Prostate gland (tissue), 2 donors: ENCODE measurements at regions of chr14 and their contacts with region 1.

Region 1: GRCh38 chr14:68140111-68140741 is 320.6 kb downstream of the RAD51B start:
- DNase-seq: peak; percentile 89
- H3K4me3 ChIP-seq: no peak overlapping the region
- H3K27ac ChIP-seq: peak overlapping the region; percentile 76 to 77
- H3K4me1 ChIP-seq: peaks cover 10% of the 10 kb centered on the region
- H3K27me3 ChIP-seq: no peaks in the 10 kb centered on the region
- CTCF ChIP-seq: no peak
- POLR2A ChIP-seq: peak; percentile 21

Region 2: GRCh38 chr14:68104518-68104917 is 35.7 kb before region 1 on chr14:
- intact Hi-C with region 1: loop called (anchors 1 kb)
- DNase-seq: no peak
- H3K4me3 ChIP-seq: no peak overlapping the region
- H3K27ac ChIP-seq: peak overlapping the region; percentile 17 to 21
- H3K4me1 ChIP-seq: no peaks in the 10 kb centered on the region
- H3K27me3 ChIP-seq: no peaks in the 10 kb centered on the region
- CTCF ChIP-seq: no peak
- POLR2A ChIP-seq: no peak

Region 3: DNA sequence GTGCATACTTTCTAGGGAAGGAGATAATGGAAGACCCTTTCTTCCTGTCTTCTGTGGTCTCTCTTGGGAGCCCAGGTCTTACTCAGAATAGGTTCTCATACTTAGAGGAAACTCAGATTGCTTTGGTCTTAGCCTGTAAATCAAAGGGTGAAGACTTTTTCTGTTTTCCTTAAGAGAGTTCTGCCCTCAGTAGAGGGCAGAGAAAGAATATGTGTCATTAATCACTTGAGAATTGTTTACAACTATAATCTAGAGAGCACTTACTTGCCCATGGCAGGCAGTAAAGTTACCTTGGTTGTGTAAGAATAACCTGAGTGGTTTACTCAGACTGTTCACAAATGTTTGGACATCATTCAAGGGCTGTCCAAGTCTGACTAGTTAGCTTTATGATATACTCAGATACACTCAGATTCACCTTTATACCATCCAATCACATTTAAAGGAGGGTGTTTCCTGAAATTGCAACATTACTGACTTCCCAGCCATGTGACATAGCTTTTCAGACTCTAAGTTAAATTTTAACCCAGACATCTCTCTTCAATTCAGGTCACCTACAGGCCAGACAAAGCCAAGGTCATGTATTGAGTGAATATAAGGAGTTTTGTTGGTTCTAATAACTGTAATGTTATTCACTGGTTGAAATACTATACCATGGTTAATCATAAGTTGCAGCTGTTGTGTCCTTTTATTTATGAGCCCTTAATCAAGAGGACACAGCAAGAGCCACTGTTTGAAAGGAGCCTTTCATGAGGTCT is 51.5 kb after region 1 on chr14:
- intact Hi-C with region 1: loop called (anchors 2 kb)
- DNase-seq: peak; percentile 71
- H3K4me3 ChIP-seq: no peak overlapping the region
- H3K27ac ChIP-seq: peak overlapping the region; percentile 39 to 40
- H3K4me1 ChIP-seq: no peaks in the 10 kb centered on the region
- H3K27me3 ChIP-seq: no peaks in the 10 kb centered on the region
- CTCF ChIP-seq: peak in 2 of 4 experiments; percentile 21 to 33
- POLR2A ChIP-seq: no peak

Region 4: GRCh38 chr14:68297876-68298469 is 157.7 kb after region 1 on chr14:
- intact Hi-C with region 1: no loop called
- DNase-seq: no peak
- H3K4me3 ChIP-seq: no peak overlapping the region
- H3K27ac ChIP-seq: no peak overlapping the region
- H3K4me1 ChIP-seq: no peaks in the 10 kb centered on the region
- H3K27me3 ChIP-seq: no peaks in the 10 kb centered on the region
- CTCF ChIP-seq: peak in 1 of 4 experiments; percentile 12
- POLR2A ChIP-seq: no peak

Region 5: GRCh38 chr14:68328509-68328908 is 188.3 kb after region 1 on chr14:
- intact Hi-C with region 1: no loop called
- DNase-seq: no peak
- H3K4me3 ChIP-seq: no peak overlapping the region
- H3K27ac ChIP-seq: no peak overlapping the region
- H3K4me1 ChIP-seq: no peaks in the 10 kb centered on the region
- H3K27me3 ChIP-seq: no peaks in the 10 kb centered on the region
- CTCF ChIP-seq: no peak
- POLR2A ChIP-seq: no peak

Region 6: DNA sequence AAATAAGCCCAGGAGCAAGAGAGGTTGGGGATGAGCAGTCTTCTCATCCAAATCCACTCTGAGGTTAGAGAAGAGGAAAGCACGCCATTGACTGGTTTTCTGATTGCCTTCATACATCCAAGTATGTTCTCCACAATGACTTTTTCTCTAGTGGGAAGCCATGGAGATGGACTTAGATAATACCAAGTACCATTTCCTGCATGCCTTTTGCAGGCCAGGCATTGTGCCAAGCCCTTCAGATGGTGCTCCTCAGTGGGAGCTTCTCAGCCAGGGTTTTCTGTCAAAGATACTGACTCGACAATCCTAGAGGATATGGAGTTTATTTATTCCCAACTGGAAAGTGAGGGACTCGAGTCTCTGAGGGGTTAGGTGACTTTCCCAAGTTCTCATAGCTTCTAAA is 434.7 kb after region 1 on chr14:
- intact Hi-C with region 1: no loop called
- DNase-seq: no peak
- H3K4me3 ChIP-seq: no peak overlapping the region
- H3K27ac ChIP-seq: no peak overlapping the region
- H3K4me1 ChIP-seq: peaks cover 7% of the 10 kb centered on the region
- H3K27me3 ChIP-seq: no peaks in the 10 kb centered on the region
- CTCF ChIP-seq: no peak
- POLR2A ChIP-seq: no peak

Region 7: GRCh38 chr14:68795597-68796417 is 655.6 kb after region 1 on chr14:
- intact Hi-C with region 1: loop called (anchors 5 kb)
- DNase-seq: peak; percentile 78
- H3K4me3 ChIP-seq: peak overlapping the region; percentile 86 to 94
- H3K27ac ChIP-seq: peak overlapping the region; percentile 99 to 100
- H3K4me1 ChIP-seq: no peaks in the 10 kb centered on the region
- H3K27me3 ChIP-seq: no peaks in the 10 kb centered on the region
- CTCF ChIP-seq: peak; percentile 76 to 98 (median 90)
- POLR2A ChIP-seq: peak; percentile 77